GM13976 (cell line): ENCODE measurements at regions of chr14 and their contacts with region 1.

Region 1: DNA sequence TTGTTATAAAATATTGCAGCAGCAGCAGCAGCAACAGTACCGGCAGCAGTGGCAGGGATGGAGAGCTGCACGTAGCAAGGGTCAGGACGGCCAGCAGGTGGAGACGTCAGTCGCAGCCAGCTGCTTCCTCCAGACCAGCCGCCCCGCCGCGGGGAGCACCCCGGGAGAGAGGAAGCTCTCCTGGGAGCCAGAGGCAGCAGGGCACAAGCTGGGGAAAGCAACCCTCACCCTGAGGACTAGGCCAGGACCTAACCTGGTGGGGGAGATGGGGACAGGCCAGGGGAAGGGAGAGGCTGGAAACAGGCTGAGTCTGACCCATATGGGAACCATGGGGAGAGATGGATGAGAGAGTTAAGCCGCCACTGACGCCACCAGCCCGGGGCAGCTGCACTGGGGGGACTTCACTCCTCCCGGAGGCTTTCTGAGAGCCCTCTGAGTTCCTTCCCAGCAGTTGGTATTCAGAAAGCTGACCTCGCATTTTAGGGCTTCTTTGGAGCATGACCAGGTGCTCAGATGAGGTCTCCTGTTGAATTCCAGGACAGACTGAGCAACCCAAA is 56.3 kb downstream of the SPTB start:
- DNase-seq: peak; percentile 90
- CTCF ChIP-seq: peak; percentile 87

Region 2: DNA sequence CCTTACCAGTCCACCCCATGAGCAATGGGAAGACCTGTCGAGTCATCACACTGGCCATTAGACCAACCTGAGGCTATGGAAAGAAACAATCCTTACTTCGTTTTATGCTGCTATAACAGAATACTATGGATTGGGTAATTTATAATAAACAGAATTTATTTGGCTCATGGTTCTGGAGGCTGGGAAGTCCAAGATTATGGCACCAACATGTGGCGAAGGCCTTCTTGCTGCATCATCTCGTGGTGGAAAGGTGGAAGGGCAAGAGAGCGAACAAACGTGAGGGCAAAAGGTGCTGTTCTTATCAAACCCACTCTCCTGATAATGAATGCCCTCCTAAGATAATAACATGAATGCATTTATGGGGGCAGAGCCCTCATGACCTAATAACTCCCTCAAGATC is 66.0 kb after region 1 on chr14:
- in situ Hi-C with region 1: loop called (anchors 5 kb)
- DNase-seq: no peak
- CTCF ChIP-seq: no peak